Common myeloid progenitor, CD34-positive (primary cell): ENCODE measurements at regions of chr6 and their contacts with region 1.

Region 1: DNA sequence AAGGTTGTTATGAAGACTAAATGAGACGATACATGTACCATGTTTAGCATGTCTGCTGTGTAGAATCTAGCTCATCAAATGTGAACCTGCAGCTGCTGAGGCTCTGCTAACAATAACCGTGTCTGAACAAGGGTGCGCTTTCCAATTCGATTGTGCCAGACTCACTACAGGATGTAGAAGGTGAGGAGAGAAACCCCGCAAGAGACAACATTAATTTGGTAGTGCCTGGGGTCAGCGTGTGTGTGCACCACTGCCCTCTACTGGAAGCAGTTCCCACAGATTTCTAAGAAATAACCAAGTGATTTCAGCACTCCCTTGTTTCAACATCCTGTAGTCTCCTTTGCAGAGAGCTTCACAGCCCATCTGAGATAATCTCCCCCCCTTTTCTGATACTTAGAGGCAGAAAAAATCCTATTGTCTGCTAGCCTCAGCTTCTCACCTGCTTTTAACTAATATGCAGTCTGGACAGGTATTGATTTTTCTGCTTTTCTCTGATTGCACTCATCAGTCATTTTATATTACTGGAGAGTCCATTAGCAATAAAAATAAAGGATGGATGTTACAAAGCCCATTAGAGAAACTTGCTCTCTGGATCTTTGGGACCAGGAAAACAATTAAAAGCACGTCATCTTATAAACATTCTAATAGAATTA is 96.7 kb upstream of the BACH2 start:
- DNase-seq: peak; percentile 62 to 84 (median 76)
- H3K4me3 ChIP-seq: no peak overlapping the region
- H3K27ac ChIP-seq: no peak overlapping the region
- H3K4me1 ChIP-seq: peaks cover 3 to 21% (median 16%) of the 10 kb centered on the region in 4 experiments
- H3K27me3 ChIP-seq: no peaks in the 10 kb centered on the region

Region 2: GRCh38 chr6:89940225-89941027 is 452.9 kb before region 1 on chr6:
- CTCF ChIA-PET with region 1: interaction called, 14 read pairs
- POLR2A ChIA-PET with region 1: no interaction called
- DNase-seq: peak; percentile 76 to 90 (median 86)
- H3K4me3 ChIP-seq: no peak overlapping the region
- H3K27ac ChIP-seq: no peak overlapping the region
- H3K4me1 ChIP-seq: no peaks in the 10 kb centered on the region
- H3K27me3 ChIP-seq: no peaks in the 10 kb centered on the region

Region 3: DNA sequence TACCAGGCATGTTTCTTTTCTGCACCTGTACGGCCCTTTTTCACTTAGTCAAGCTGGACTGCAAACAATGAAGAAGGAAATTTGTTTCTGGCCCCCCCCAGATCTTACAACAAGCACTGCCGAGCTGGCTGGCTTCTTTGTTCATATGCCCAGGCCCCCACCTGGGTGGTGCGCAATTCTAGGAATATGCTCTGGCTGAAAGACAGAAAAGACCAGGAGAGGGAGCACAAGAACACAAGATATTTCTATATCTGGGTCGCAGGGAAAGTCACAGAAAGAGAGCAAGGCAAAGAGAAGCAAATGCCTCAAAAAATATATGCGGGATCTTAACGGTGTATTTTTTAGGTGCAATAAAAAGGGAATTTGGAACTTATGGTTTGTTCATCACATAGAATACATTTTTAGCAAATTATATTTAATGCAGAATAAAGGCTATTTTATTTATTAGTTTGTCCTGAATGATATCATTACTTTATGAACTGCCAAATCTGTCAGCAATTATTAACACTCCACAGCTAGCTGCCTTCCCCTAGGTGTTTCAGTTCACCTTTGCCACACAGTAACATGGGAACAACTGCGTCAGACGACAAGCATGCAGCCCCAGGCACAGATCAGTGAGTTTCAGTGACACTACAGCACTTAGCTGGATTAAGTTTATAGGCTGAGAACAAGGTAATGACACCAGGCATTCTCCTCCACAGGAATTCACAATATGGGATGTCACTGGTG is 422.6 kb before region 1 on chr6:
- CTCF ChIA-PET with region 1: interaction called, 15 read pairs
- POLR2A ChIA-PET with region 1: no interaction called
- DNase-seq: peak; percentile 62 to 74 (median 72)
- H3K4me3 ChIP-seq: no peak overlapping the region
- H3K27ac ChIP-seq: no peak overlapping the region
- H3K4me1 ChIP-seq: no peaks in the 10 kb centered on the region
- H3K27me3 ChIP-seq: no peaks in the 10 kb centered on the region

Region 4: DNA sequence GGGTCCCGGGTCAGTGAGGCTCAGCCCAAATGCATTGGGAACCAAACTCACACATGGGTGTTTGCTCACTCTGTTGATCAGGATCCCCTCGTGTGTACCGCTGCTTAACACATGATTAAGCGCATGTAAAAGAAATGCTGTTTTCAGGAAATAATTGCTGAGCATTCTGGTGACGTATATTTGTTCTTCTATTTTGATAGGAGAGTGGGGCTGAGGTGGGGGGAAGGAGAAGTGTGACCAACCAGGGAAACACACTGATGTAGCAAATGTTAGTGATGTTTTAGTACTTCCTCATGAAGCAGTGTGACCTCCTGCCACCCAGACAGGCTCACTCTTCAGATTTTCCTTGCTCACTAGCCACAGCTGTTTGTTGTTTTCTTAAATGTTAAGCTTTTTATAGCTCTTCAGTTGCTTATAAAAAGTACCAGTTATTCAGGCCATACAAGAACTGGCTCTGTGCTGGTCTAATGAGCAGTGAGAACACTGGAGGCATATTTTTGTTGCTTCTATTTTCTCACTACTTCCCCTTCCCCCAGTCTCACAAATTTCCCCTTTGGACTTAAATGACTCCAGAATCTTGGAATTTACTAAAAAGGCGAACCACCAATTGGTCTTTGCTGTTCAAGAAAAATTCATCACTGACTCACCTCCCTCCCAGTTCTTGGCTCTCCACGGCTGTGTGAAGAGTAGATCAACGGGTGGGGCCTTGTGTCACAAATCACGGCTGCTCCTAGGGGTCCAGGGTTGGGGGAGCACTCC is 17.5 kb before region 1 on chr6:
- CTCF ChIA-PET with region 1: interaction called, 12 read pairs
- POLR2A ChIA-PET with region 1: no interaction called
- DNase-seq: peak; percentile 42 to 78 (median 69)
- H3K4me3 ChIP-seq: no peak overlapping the region
- H3K27ac ChIP-seq: no peak overlapping the region
- H3K4me1 ChIP-seq: peaks cover 0 to 5% (median 1%) of the 10 kb centered on the region in 4 experiments
- H3K27me3 ChIP-seq: no peaks in the 10 kb centered on the region

Region 5: DNA sequence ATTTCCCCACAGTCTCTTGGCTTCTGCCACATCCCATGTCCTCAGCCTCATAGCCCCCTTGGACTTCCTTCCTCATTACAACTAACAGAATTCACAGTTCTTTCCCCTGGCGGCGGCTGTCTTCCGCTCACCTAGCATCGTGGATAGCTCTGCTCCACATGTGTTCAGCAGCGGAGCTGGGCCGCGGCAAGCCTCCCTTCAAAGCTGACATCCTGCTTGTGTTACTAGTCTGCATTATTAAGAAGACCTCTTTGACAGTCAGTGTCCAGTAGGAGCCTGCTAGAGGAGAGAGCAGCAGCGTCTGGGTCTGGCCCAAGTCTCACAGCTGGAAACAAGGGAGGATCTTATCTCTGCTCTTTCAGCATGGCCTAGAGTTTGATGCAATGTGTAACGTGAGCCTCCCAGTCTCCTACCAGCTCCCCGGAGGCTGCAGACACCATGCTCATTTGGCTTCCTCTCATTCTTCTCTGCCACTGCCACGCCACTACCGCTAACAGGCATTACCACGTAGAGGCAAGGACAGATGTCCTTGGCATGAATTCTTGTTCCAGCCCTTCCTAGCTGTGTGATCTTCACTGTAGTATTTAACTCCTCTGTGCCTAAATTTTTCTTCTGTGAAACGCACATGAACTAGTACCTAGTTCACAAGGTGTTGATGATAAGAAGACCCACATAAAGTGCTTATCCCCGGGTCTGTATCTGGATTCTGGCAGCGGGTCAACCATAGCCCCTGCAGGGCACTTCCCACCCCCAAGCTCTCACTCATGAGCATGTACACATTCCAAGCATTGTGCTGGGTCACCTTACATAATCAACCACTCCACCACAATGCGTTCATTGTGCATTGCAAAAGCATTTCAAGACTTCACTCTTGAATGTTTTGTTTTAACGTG is 10.4 kb after region 1 on chr6:
- CTCF ChIA-PET with region 1: interaction called, 13 read pairs
- POLR2A ChIA-PET with region 1: no interaction called
- DNase-seq: peak in 2 of 3 donors; percentile 47 to 53
- H3K4me3 ChIP-seq: no peak overlapping the region
- H3K27ac ChIP-seq: no peak overlapping the region
- H3K4me1 ChIP-seq: peaks cover 0 to 18% (median 13%) of the 10 kb centered on the region in 4 experiments
- H3K27me3 ChIP-seq: no peaks in the 10 kb centered on the region

Region 6: GRCh38 chr6:90478789-90479602 is 85.6 kb after region 1 on chr6:
- CTCF ChIA-PET with region 1: interaction called, 20 read pairs
- POLR2A ChIA-PET with region 1: no interaction called
- DNase-seq: peak; percentile 90 to 95 (median 94)
- H3K4me3 ChIP-seq: no peak overlapping the region
- H3K27ac ChIP-seq: no peak overlapping the region
- H3K4me1 ChIP-seq: peaks cover 0 to 7% (median 4%) of the 10 kb centered on the region in 4 experiments
- H3K27me3 ChIP-seq: no peaks in the 10 kb centered on the region